ENCODE measurements at regions of chr17 and their contacts with region 1.

Region 1: DNA sequence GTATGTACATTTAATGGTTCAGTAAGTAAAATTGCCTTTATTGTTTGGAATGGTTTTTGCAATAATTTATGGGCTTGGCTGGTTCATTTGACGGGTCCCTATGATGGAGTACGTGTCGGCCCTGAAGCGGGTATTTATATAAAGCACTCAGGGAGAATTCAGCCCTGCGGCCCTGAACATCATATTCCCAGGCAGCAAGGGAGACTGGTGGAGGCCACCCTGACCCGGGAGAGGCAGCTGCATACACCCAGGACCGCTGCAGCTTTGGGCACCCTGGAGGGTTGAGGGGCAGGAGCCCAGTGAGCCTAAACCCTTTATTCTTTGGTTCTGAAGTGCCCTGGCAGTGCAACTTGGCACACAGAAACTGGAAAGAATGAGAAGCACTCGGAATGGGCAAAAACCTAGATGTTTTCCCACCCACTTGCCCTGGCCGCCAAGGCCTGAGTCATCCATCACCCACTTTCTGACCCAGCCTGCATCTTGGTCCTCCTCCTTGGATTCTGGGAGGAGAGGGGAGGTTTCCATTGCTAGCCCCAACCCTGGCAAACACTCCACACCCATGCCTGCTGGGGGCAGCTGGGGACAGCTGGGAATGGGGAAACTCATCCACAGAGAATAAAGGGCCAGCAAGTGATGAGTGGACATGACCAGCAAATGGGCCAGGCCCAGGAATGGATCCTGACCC is 162.2 kb upstream of the TNRC6C start:
- DNase-seq: peak in 1 of 2 donors; percentile 32
- H3K4me3 ChIP-seq: no peak overlapping the region
- H3K27ac ChIP-seq: no peak overlapping the region
- H3K4me1 ChIP-seq: no peaks in the 10 kb centered on the region
- H3K27me3 ChIP-seq: no peaks in the 10 kb centered on the region
- CTCF ChIP-seq: no peak
- POLR2A ChIP-seq: no peak

Region 2: DNA sequence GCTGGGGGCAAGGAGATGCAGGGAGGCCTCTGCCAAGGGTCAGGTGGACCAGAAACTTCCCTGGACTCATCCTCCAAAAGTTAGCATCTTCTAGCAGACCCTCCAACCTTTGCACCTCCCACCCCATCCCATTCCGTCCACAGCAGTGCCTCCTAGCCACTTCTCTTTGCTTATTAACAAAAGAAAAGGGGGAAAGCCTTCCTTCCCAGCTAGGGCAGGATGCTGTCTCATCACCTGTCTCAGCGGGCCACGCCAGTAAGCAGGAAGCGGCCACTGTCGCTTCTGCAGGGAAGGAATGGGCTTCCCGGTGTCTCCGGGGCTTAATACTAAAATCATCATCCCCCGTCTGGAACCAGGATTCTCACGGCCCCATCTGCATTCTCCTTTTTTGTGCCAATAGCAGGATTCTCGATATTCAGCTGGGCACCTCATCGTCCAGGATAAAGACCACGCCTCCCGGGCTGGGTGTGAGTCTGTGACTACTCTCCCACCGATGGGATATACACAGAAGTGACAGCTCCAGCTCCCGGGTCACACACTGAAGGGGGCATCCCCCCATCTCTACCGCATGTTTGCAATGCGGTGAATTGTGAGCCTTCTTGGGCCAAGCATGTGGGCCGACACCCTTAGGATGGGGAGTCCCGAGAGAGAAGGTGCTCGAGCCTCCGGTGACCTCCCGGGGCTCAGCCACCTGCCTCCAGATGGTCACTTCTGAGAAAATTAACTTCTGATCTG is 1830.0 kb after region 1 on chr17:
- intact Hi-C with region 1: loop called (anchors 5 kb)
- DNase-seq: peak in 1 of 2 donors; percentile 42
- H3K4me3 ChIP-seq: no peak overlapping the region
- H3K27ac ChIP-seq: no peak overlapping the region
- H3K4me1 ChIP-seq: no peaks in the 10 kb centered on the region
- H3K27me3 ChIP-seq: peaks cover 0 to 35% of the 10 kb centered on the region in 2 donors
- CTCF ChIP-seq: no peak
- POLR2A ChIP-seq: no peak

Measured in breast epithelium (tissue), 4 donors.